ENCODE measurements at regions of chr14 and their contacts with region 1.

Region 1: DNA sequence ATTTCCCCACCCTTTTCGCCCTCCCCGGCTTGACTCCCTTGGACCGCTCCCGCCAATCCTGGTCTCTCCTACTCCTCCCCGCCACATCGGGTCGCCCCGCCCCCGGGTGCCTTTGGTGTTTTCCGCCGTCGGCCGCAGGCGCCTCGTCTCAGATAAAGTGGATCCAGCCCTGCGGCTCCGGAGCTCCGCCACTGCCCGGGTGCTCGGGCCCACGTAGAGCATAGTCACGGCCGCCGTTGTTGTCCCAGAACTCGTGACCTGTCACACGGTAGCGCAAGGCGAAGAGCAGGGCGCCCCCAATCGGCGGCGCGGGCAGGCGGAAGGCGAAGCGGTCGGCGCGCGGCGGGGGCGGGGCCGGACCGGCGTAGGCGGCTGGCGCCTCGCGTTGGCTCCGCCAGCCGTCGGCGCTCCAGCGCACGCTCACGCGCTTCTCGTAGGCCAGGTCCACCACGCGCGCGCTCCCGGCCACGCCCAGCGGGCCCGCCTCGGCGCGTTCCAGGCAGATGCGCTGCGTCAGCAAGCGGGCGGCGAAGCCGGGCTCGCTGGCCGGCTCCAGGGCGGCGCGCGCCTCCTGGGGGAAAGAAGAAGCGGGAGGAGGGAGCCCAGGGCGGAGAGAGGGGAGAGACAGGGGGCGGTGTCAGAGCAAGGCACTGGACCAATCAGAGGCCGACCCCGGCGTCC is 1.2 kb downstream of the PPP1R3E start:
- DNase-seq: peak; percentile 96
- H3K4me3 Mint-ChIP-seq: peak overlapping the region; percentile 94
- H3K27ac Mint-ChIP-seq: peak overlapping the region; percentile 98
- H3K4me1 Mint-ChIP-seq: peaks cover 31% of the 10 kb centered on the region
- H3K27me3 Mint-ChIP-seq: peaks cover 11% of the 10 kb centered on the region

Region 2: GRCh38 chr14:23286020-23286905 is 15.2 kb before region 1 on chr14 and contains the start of gene HOMEZ:
- CTCF ChIA-PET with region 1: interaction called, 24 read pairs
- POLR2A ChIA-PET with region 1: interaction called, 13 read pairs
- DNase-seq: peak; percentile 98
- H3K4me3 Mint-ChIP-seq: peak within 1 kb of the TSS; percentile 89
- H3K27ac Mint-ChIP-seq: peak within 1 kb of the TSS; percentile 91
- H3K4me1 Mint-ChIP-seq: peaks cover 32% of the 10 kb centered on the region
- H3K27me3 Mint-ChIP-seq: no peaks in the 10 kb centered on the region
- total RNA-seq, gene HOMEZ: 11.4 TPM

Region 3: DNA sequence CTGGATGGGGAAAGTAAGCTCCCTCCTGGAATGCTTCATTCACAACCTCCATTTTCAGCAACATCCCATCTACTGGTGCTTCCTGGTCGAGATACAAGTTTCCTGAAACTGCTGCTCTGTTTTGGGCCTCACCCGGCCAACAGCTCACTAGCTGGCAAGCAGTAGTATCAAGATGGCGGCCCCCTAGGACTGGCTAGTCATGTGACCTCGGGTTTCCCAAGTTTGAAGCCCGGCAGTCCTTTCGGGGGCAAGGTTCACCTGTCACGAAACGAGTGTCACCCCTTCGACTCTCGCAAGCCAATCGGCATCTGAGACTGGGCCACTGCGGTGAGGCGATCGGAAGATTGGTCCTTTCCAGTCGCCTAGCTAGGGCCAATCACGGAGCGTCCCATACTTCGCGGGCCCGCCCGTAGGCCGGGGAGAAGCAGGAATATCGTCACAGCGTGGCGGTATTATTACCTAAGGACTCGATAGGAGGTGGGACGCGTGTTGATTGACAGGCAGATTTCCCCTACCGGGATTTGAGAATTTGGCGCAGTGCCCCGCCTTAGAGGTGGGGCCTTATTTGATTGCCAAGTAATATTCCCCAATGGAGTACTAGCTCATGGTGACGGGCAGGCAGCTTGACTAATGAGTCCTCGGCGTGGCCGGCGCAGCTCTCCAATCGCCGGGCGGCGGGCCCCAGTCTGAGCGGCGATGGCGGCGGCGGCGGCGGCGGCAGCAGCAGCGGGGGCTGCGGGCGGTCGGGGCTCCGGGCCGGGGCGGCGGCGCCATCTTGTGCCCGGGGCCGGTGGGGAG is 19.5 kb after region 1 on chr14 and contains the start of gene PABPN1:
- CTCF ChIA-PET with region 1: interaction called, 59 read pairs
- POLR2A ChIA-PET with region 1: interaction called, 8 read pairs
- DNase-seq: peak; percentile 99
- H3K4me3 Mint-ChIP-seq: peak within 1 kb of the TSS; percentile 93
- H3K27ac Mint-ChIP-seq: peak within 1 kb of the TSS; percentile 98
- H3K4me1 Mint-ChIP-seq: peaks cover 34% of the 10 kb centered on the region
- H3K27me3 Mint-ChIP-seq: no peaks in the 10 kb centered on the region
- total RNA-seq, gene PABPN1: 203 to 208 TPM